Transverse colon (tissue), 4 donors: ENCODE measurements at regions of chr11 and their contacts with region 1.

Region 1: DNA sequence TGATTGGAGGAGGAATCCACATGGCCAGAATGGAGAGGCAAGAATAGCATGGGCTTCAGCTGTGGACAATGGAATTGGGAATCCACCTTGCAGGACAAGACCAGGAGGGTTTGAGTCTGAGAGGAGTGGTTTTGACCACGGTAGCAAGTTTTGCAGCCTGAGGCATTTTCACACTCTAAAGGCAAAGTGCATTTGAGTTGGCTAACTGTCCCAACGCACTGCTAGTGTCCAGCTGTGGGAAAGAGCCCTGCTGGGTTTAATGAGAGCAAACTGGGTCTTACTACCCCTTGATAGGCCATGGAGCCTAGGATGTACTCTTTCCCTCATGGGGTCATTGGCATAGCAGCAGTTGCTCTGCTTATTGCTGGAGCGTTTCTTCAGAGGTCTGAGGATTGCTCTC is at the start of gene OR5B2:
- DNase-seq: no peak
- H3K4me3 ChIP-seq: no peak within 1 kb of the TSS
- H3K27ac ChIP-seq: no peak within 1 kb of the TSS
- H3K4me1 ChIP-seq: no peaks in the 10 kb centered on the region
- H3K27me3 ChIP-seq: no peaks in the 10 kb centered on the region
- CTCF ChIP-seq: no peak
- EP300 ChIP-seq: no peak
- POLR2A ChIP-seq: no peak
- total RNA-seq, gene OR5B2: not detected

Region 2: DNA sequence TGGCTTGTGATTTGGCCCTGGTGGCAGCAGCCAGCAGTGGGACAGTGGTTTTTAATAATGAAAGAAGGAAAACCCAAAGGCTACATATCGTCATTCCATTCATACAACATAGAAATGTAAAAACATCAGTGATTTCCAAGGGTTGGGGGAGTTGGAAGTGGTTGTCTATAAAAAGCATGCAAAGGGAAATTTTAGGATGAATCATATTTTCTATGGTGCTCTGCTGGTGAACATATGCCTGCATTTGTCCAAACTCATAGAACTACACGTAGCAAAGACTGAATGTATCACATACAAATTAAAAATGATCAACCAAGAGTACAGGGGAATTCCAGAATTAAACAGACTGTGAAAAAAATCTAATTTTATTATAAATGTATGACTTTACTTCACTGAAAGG is 32.4 kb before region 1 on chr11:
- in situ Hi-C with region 1: no loop called
- intact Hi-C with region 1: loop called (anchors 1 kb)
- DNase-seq: no peak
- H3K4me3 ChIP-seq: no peak overlapping the region
- H3K27ac ChIP-seq: no peak overlapping the region
- H3K4me1 ChIP-seq: no peaks in the 10 kb centered on the region
- H3K27me3 ChIP-seq: no peaks in the 10 kb centered on the region
- CTCF ChIP-seq: no peak
- EP300 ChIP-seq: no peak
- POLR2A ChIP-seq: no peak